ENCODE measurements at regions of chrX and their contacts with region 1.

Region 1: GRCh38 chrX:25144043-25144940 is 128.5 kb upstream of the ARX start:
- DNase-seq: peak; percentile 16
- H3K4me3 ChIP-seq: no peak overlapping the region
- H3K27ac ChIP-seq: no peak overlapping the region
- H3K4me1 ChIP-seq: no peaks in the 10 kb centered on the region
- H3K27me3 ChIP-seq: no peaks in the 10 kb centered on the region
- CTCF ChIP-seq: peak; percentile 22 to 57 (median 54)
- POLR2A ChIP-seq: no peak

Region 2: GRCh38 chrX:24515447-24515846 is 628.8 kb before region 1 on chrX:
- intact Hi-C with region 1: loop called (anchors 10 kb)
- DNase-seq: no peak
- H3K4me3 ChIP-seq: no peak overlapping the region
- H3K27ac ChIP-seq: no peak overlapping the region
- H3K4me1 ChIP-seq: no peaks in the 10 kb centered on the region
- H3K27me3 ChIP-seq: no peaks in the 10 kb centered on the region
- CTCF ChIP-seq: peak in 1 of 4 experiments; percentile 6
- POLR2A ChIP-seq: no peak

Region 3: DNA sequence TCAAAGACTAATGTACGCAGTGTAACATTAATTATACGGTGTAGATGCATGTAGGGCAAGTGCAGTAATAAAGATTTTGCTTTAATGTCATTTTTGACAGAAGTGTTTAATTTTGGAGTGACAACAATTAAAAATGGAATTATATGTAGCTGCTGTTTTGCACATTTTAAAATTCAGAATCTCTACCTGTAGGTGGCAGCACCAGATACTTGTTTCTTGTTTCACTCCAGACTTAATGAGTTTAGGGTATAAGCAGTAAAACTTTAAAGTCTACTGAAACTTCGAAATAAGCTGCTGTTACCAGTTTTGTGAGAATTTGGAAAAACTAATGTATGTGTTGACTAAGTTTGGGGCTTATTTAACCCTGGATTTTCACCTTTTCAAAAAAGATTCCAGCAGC is 305.7 kb before region 1 on chrX:
- intact Hi-C with region 1: loop called (anchors 5 kb)
- DNase-seq: peak; percentile 7
- H3K4me3 ChIP-seq: no peak overlapping the region
- H3K27ac ChIP-seq: no peak overlapping the region
- H3K4me1 ChIP-seq: no peaks in the 10 kb centered on the region
- H3K27me3 ChIP-seq: no peaks in the 10 kb centered on the region
- CTCF ChIP-seq: peak in 3 of 4 experiments; percentile 32 to 49 (median 43)
- POLR2A ChIP-seq: no peak

Region 4: DNA sequence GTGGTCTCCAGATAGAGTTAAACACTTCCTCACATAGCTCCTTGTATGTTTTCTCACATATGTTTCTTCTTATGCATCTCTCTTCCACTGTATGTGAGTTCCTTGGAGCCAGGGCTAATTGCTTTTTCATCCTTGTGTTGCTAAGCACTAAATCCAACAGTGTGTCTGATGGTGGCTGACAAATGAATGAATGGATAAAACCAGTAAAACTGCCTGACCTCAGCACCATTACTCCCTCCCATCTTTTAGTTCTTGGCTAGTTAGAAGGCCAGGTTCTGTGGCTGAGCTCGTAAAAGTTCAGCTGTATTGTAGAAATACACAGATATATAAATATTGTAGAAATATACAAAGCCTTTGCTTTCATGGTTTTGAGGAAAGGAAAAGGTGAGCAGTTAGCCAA is 178.9 kb before region 1 on chrX:
- intact Hi-C with region 1: no loop called
- DNase-seq: no peak
- H3K4me3 ChIP-seq: no peak overlapping the region
- H3K27ac ChIP-seq: no peak overlapping the region
- H3K4me1 ChIP-seq: no peaks in the 10 kb centered on the region
- H3K27me3 ChIP-seq: no peaks in the 10 kb centered on the region
- CTCF ChIP-seq: no peak
- POLR2A ChIP-seq: no peak